A549 (cell line): ENCODE measurements at regions of chr4 and their contacts with region 1.

Region 1: DNA sequence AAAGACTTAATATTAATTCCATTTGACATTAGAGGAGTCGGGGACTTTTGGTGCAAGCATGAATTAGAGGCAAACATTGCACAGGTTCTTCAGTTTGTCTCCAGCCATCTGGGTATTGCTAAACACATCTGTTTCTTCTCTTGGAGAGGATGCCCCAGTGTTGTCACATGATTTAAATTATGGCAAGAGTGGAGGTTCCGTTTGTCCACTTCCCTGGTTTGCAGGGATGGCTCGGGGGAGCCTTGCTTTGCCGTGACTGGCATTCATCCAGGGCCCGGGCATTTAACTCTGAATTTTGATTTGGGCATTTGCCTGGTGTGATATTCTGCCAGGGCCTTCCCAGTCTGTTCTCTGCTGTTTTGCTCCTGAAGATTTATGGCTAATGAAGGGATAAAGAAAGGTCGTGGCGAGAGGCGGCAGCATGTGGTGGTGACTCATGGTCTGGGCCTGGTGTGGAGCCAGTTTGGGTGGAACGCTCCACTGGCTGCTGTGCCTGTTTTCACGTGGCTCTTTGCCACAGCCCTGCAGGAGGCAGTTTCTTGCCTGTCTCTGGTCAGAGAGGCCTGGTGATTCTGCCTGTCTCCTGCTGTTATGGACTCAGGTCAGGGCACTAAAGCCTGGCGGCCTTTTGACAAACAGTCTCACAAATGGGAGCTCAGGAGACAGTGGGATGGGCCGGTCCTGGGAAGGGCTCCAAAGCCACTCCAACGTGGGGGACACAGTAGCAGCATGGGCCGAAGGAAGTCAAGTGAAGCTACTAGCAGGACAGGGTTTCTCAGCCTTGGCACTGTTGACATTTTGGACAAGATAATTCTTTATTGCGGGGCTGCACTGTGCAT is 99.4 kb upstream of the PGRMC2 start:
- DNase-seq: peak; percentile 42 to 90
- ATAC-seq: peak; percentile 88 to 89
- H3K4me3 ChIP-seq: no peak overlapping the region
- H3K27ac ChIP-seq: peak overlapping the region; percentile 87 to 88
- H3K4me1 ChIP-seq: peaks cover 72% of the 10 kb centered on the region
- CTCF ChIP-seq: no peak
- EP300 ChIP-seq: peak; percentile 67 to 85; a peak in 3 of 5 replicates
- POLR2A ChIP-seq: no peak
- RAD21 ChIP-seq: peak; percentile 39 to 43

Region 2: DNA sequence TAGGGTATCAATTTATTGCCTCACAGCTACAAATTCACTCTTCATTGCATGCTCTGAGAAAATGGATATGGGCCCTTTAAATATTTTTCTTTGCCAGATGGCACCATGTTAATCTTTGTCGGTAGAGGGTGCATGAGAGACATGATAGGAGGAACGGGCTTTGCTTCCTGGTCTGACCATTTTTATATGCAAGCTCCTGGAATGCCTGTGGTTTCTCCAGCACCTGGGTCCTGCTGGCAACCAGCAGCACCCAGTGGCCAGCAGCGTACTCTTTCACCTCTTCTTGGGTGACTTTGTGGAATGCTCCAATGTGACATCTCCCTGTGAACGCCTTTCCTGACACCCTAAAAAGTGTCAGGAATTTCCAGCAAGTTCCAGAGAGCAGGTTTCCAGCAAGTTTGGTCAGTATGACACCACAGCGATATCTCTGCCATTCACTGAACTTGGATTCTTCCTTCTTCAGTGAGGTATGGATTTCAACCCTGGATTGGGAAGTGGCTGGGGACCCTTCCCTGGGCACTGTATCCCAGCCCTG is 40.9 kb after region 1 on chr4:
- CTCF ChIA-PET with region 1: interaction called, 13 read pairs
- POLR2A ChIA-PET with region 1: no interaction called
- DNase-seq: peak; percentile 79 to 94
- ATAC-seq: peak; percentile 100
- H3K4me3 ChIP-seq: peak overlapping the region; percentile 52
- H3K27ac ChIP-seq: peak overlapping the region; percentile 96 to 97
- H3K4me1 ChIP-seq: peaks cover 5% of the 10 kb centered on the region
- CTCF ChIP-seq: peak; percentile 73
- EP300 ChIP-seq: 0 out of 5 replicates have a peak, but pooled peaks of 1 of the 2 experiments have one; percentile 15
- POLR2A ChIP-seq: no peak
- RAD21 ChIP-seq: peak; percentile 90 to 94